ENCODE measurements at regions of chr15 and their contacts with region 1.

Region 1: DNA sequence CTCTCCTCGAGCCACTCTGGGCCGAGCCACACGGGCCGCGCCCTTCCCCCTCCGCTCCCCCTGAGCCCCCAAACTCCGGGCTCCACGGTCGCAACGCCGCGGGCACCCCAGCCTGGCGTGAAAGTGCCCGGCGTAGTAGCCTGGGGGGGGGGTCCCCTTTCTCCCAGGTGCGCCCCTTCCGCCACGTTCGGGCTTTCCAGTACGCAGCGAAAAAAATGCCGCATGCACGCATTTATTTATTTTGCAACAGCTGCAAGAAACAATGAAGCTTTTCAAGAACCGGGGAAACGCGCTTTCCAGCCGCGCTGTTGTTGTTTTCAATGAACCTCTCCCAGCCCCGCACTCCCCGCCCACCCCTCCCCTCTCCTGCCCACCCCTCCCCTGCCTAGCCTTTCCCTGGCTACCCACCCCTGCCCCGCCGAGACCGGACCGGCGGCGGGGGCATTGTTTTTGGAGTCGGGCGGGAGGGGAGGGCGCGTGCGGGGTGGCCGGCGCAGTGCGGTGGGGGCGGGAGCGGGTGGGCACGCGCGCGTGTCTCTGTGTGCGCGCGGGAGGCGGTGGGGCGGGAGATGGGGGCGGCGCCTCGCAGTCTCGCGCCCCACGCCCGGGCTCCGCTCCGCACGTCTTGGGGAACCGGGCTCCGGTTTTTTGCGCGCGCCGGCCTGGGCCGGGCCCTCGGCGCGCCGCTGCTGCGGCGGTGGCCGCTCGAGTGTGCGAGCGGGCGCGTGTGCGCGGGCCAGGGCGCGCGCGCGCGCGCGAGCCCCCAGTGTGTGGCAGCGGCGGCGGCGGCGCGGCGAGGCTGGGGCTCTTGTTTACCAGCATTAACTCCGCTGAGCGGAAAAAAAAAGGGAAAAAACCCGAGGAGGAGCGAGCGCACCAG is at the start of gene IGF1R:
- DNase-seq: peak; percentile 88
- H3K4me3 ChIP-seq: peak within 1 kb of the TSS; percentile 93 to 98
- H3K27ac ChIP-seq: peak within 1 kb of the TSS; percentile 94 to 97
- H3K4me1 ChIP-seq: no peaks in the 10 kb centered on the region
- H3K27me3 ChIP-seq: no peaks in the 10 kb centered on the region
- CTCF ChIP-seq: peak in 1 of 4 experiments; percentile 19
- POLR2A ChIP-seq: peak; percentile 49
- total RNA-seq, gene IGF1R: 190 to 216 TPM

Region 2: DNA sequence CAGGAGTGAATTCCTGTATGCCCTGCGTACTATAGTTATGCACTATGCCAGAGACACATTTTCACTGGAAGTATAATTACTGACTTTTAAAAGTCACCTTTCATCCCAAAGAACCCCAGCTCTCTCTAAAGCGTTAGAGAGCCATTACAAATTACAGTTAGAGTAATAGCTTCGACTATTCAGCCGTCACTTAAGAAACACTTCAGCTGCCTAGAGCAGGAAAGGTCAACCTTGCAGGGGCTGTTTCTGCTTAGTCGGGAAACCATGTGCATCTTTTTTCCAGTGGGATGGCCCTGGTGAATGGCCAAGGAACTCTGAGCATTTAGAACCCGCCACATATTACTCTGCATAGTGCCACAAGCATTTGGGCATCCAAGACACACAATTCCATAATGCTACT is 451.6 kb before region 1 on chr15:
- intact Hi-C with region 1: no loop called
- DNase-seq: no peak
- H3K4me3 ChIP-seq: no peak overlapping the region
- H3K27ac ChIP-seq: no peak overlapping the region
- H3K4me1 ChIP-seq: no peaks in the 10 kb centered on the region
- H3K27me3 ChIP-seq: no peaks in the 10 kb centered on the region
- CTCF ChIP-seq: no peak
- POLR2A ChIP-seq: no peak

Region 3: DNA sequence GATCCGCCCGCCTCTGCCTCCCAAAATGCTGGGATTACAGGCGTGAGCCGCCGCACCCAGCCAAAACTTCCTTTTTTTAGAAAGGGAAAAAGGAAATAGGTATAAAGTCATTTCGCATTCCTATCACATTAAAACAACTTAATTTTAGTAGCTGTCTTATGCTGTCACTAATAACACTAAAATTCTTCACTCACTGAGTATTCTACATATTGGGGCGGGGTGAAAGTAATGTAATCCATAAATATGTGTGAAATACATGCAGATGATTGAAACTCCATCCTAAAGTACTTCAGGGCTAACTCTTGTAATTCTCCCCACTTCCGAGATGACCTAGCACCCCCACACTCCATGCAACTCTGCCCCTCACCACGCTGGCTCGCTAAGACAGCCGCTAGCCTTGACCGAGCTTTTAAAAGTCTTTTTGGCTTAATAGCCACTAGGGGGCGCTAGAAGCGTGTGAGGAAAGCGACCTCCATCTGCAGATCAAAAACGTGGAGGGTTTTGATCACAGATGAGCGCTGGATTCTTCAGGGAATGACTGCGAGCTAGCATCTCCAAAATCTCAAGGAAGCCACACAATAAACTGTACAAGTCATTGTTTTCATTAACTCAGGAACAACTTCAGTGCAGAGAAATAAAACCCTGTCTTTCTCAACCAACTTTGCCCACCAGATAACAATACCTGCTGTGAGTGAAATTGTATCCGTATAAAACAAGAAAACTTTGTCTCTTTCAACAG is 129.0 kb before region 1 on chr15:
- intact Hi-C with region 1: loop called (anchors 5 kb)
- DNase-seq: peak; percentile 65
- H3K4me3 ChIP-seq: no peak overlapping the region
- H3K27ac ChIP-seq: no peak overlapping the region
- H3K4me1 ChIP-seq: no peaks in the 10 kb centered on the region
- H3K27me3 ChIP-seq: no peaks in the 10 kb centered on the region
- CTCF ChIP-seq: peak; percentile 36 to 82 (median 80)
- POLR2A ChIP-seq: no peak

Region 4: DNA sequence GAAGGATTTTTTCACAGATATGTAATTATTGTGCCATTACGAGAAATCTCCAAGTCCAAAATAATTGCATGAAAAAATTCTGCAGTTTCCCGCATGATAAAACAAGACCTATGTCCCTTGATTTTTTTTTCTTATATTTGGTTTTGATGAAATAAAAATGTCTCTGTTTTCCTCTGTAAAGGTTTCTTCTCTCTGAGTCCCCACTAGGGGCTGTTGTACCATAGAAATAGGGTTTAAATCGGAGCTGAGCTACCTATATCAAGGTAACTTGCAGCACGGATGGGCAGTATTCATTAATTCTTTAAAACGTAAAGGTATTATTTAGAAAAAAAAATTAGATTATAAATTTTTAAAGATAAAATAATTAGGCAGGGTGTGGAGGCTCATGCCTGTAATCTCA is 66.3 kb before region 1 on chr15:
- intact Hi-C with region 1: no loop called
- DNase-seq: no peak
- H3K4me3 ChIP-seq: no peak overlapping the region
- H3K27ac ChIP-seq: no peak overlapping the region
- H3K4me1 ChIP-seq: no peaks in the 10 kb centered on the region
- H3K27me3 ChIP-seq: no peaks in the 10 kb centered on the region
- CTCF ChIP-seq: peak in 1 of 4 experiments; percentile 35
- POLR2A ChIP-seq: no peak

Region 5: DNA sequence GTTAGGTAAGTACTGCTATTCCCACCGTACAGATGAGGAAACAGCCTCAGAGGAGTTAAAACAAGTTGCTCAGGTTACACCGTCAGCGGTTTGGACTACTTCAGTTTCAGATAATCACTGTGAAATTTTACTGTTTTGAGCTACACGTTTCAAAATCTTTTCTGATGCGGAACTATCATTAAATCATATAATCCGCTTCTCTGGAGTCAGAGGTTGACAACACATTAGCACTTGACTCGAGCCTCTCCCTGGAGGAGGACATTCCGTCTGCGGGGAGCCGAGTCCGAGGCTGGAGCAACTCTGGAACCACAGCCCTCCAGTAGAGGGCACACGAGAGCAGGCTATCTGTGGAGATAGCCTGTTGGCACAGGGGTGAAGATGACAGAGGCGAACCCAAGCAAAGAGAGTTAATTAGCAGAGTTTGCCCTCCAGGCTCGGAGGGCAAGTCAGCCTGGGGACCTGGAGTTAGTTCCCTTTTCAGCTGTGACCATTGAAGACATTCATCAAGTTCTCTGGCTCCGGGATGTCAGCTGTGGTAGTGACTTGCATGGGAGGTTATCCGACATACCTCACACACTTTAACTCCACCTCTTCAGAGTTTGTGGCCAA is 131.6 kb after region 1 on chr15:
- intact Hi-C with region 1: loop called (anchors 5 kb)
- DNase-seq: peak; percentile 60
- H3K4me3 ChIP-seq: no peak overlapping the region
- H3K27ac ChIP-seq: peak overlapping the region; percentile 40 to 65
- H3K4me1 ChIP-seq: peaks cover 24% of the 10 kb centered on the region
- H3K27me3 ChIP-seq: no peaks in the 10 kb centered on the region
- CTCF ChIP-seq: peak; percentile 62 to 90 (median 76)
- POLR2A ChIP-seq: no peak

Region 6: DNA sequence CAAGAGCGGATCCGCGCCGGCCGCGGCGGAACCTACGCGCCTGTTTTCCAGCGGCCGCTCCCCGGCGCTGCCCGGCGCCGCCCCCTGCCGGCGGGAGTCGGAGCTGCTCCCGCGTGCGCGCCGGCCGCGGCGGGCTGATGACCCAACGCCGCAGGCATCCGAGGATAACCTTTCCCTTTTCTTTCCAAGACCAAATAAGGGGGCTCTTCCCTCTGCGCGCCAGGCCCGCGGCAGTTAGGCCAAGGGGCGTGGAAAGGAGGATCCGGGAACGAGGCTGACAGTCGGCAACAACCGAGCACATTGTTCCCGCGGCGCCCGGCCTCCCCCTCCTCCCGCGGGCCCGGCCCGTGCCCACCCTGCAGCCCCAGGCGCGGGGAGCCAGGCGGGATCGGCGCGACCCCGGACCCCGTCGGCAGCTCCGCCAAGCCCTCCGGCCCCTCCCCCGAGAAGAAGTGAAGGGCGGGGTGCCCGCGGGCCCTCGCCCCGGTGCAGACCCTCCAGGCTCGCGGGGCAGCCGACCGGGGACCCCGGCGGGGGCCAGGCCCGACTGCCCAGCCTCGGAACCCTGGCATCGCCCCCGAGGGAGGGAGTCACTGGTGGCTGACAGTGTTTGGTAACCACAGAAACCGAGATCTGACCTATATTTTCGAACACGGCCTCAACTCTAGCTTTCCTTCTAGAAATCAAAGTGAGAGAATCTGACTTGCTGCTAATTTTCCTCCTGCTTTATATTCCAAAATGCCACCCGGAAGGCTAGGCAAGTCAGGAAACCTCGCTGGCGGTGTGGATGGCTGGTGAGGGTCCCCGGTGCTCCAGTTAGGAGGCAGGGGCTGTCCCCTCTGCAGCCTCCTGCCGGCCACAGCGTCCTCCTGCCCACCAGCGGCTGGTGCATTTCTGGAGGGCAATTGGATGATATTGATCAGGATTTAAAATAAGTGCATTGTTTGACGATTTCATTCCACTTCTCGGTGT is 411.3 kb after region 1 on chr15:
- intact Hi-C with region 1: loop called (anchors 5 kb)
- DNase-seq: peak; percentile 49
- H3K4me3 ChIP-seq: peak overlapping the region; percentile 36 to 52
- H3K27ac ChIP-seq: peak overlapping the region; percentile 75 to 82
- H3K4me1 ChIP-seq: no peaks in the 10 kb centered on the region
- H3K27me3 ChIP-seq: no peaks in the 10 kb centered on the region
- CTCF ChIP-seq: peak; percentile 72 to 92 (median 88)
- POLR2A ChIP-seq: no peak

Measured in prostate gland (tissue), 2 donors.